BJ (cell line): ENCODE measurements at regions of chr9 and their contacts with region 1.

Region 1: GRCh38 chr9:78132701-78133058 is 101.1 kb upstream of the GNAQ start:
- DNase-seq: no peak
- H3K4me3 ChIP-seq: no peak overlapping the region
- H3K27me3 ChIP-seq: peaks cover 2% of the 10 kb centered on the region; the same call in 1 of the 2 replicates
- CTCF ChIP-seq: no peak

Region 2: GRCh38 chr9:78121488-78121887 is 11.2 kb before region 1 on chr9:
- CTCF ChIA-PET with region 1: interaction called, 12 read pairs
- POLR2A ChIA-PET with region 1: no interaction called
- DNase-seq: no peak
- H3K4me3 ChIP-seq: no peak overlapping the region
- H3K27me3 ChIP-seq: no peaks in the 10 kb centered on the region
- CTCF ChIP-seq: peak; percentile 70

Region 3: GRCh38 chr9:78144663-78145377 is 12.1 kb after region 1 on chr9:
- CTCF ChIA-PET with region 1: no interaction called
- POLR2A ChIA-PET with region 1: no interaction called
- DNase-seq: no peak
- H3K4me3 ChIP-seq: no peak overlapping the region
- H3K27me3 ChIP-seq: no peaks in the 10 kb centered on the region
- CTCF ChIP-seq: no peak